HepG2 (cell line): ENCODE measurements at regions of chr19 and their contacts with region 1.

Region 1: DNA sequence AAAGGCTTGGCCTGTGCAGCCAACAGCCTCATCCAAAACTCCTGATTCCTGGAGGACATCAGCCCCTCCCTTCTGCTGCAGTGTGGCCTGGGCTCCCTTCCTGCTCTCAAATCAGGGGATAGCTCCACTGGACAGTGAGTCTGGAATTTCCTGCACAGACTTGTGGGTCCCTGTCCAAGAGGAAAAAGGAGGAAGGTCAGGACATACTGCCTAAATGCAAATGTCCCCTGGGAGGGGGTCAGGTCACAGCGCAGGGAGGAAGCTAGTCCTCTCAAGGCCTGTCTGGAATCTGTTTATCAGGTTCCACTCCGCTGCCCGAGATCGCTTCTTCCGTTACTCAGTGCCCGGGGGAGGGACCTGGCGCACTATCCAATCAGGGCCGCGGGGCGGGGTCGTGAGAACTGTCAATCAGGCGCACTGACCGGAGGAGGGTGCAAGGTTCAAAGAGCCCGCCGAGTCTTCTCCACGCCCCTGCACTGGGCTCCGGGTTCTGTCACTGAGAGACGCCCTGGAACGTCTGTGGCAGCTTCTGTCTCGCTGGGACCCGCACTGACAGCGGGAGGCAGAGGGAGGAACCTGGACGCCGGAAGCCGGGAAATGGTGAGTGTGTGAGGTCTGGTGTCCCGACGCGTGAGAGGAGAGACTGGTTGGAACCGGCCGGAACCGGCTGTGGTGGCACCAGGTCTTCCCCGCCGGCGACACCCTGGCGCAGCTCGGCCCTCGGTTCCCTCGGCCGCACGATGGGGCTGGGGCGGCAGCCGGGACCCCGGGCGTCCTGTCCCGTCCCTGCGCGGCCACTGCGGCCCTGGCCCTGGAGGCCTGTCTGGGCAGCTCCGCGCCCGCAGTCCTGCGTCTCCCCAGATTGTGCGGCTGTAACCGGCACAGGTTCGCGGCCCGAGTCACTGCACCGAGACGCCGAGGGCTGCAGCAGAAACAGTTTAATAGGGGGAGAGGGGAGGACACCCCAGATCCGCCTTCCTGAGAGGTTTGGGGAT is at the start of gene ZNF441:
- DNase-seq: peak; percentile 94
- ATAC-seq: peak; percentile 93
- H3K4me3 ChIP-seq: peak within 1 kb of the TSS; percentile 72 to 89 (median 81)
- H3K27ac ChIP-seq: peak within 1 kb of the TSS; percentile 85
- H3K4me1 ChIP-seq: peaks cover 32% of the 10 kb centered on the region
- H3K27me3 ChIP-seq: no peaks in the 10 kb centered on the region; a peak in 2 of 5 replicates
- CTCF ChIP-seq: no peak
- EP300 ChIP-seq: 0 out of 4 replicates have a peak, but pooled peaks of 1 of the 2 experiments have one; percentile 22
- POLR2A ChIP-seq: peak; percentile 77 to 93
- RAD21 ChIP-seq: no peak; the same call in 1 of the 2 replicates
- total RNA-seq, gene ZNF441: 10.0 and 18.0 TPM in 2 replicates

Region 2: DNA sequence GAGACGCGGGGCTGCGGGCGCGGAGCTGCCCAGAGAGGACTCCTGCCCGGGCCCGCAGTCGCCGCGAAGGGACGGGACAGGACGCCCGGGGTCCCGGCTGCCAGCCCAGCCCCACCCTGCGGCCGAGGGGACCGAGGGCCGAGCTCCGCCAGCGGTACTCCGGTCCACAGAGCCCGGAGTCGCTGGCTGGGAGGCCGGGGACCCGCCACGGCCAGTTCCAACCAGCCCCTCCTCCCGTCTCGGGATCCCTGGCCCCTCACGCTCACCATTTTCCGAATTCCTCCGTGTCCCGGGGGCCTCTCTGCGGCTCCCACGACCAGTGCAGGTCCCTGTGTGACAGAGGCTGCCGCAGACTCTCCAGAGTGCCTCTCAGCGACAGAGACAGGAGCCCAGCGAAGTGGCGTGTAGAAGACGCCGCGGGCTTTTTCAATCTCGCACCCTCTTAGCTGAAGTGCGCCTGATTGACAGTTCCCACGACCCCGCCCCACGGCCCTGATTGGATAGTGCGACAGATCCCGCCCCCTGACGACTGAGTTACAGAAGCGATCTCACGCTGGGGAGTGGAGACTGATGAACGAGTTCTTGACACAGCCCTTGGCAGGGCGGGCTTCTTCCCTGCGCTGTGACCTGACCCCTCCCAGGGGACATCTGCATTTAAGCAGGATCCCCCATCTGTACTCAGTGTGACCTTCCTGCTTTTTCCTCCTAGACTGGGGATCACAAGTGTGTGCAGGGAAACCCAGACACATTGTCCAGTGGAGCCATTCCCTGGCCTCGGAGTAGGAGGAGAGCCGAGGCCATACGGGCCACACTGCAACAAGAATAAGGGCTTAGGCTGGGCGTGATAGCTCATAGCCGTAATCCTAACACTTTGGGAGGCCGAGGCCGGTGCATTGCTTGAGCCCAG is 72.1 kb before region 1 on chr19:
- CTCF ChIA-PET with region 1: no interaction called
- POLR2A ChIA-PET with region 1: interaction called, 10 read pairs
- in situ Hi-C with region 1: no loop called
- intact Hi-C with region 1: no loop called
- DNase-seq: peak; percentile 90
- ATAC-seq: peak; percentile 92
- H3K4me3 ChIP-seq: peak overlapping the region; percentile 70 to 87 (median 86)
- H3K27ac ChIP-seq: peak overlapping the region; percentile 83
- H3K4me1 ChIP-seq: peaks cover 45% of the 10 kb centered on the region
- H3K27me3 ChIP-seq: no peaks in the 10 kb centered on the region
- CTCF ChIP-seq: no peak
- EP300 ChIP-seq: 0 out of 4 replicates have a peak, but pooled peaks of 1 of the 2 experiments have one; percentile 6
- POLR2A ChIP-seq: peak; percentile 83 to 93
- RAD21 ChIP-seq: no peak

Region 3: GRCh38 chr19:11708457-11708856 is 58.4 kb before region 1 on chr19:
- CTCF ChIA-PET with region 1: no interaction called
- POLR2A ChIA-PET with region 1: no interaction called
- in situ Hi-C with region 1: no loop called
- intact Hi-C with region 1: no loop called
- DNase-seq: no peak
- ATAC-seq: peak; percentile 43; the same call in 2 of the 3 replicates
- H3K4me3 ChIP-seq: no peak overlapping the region
- H3K27ac ChIP-seq: no peak overlapping the region
- H3K4me1 ChIP-seq: peaks cover 44% of the 10 kb centered on the region
- H3K27me3 ChIP-seq: no peaks in the 10 kb centered on the region
- CTCF ChIP-seq: no peak
- EP300 ChIP-seq: no peak
- POLR2A ChIP-seq: no peak
- RAD21 ChIP-seq: no peak